ENCODE measurements at regions of chr6 and their contacts with region 1.

Region 1: DNA sequence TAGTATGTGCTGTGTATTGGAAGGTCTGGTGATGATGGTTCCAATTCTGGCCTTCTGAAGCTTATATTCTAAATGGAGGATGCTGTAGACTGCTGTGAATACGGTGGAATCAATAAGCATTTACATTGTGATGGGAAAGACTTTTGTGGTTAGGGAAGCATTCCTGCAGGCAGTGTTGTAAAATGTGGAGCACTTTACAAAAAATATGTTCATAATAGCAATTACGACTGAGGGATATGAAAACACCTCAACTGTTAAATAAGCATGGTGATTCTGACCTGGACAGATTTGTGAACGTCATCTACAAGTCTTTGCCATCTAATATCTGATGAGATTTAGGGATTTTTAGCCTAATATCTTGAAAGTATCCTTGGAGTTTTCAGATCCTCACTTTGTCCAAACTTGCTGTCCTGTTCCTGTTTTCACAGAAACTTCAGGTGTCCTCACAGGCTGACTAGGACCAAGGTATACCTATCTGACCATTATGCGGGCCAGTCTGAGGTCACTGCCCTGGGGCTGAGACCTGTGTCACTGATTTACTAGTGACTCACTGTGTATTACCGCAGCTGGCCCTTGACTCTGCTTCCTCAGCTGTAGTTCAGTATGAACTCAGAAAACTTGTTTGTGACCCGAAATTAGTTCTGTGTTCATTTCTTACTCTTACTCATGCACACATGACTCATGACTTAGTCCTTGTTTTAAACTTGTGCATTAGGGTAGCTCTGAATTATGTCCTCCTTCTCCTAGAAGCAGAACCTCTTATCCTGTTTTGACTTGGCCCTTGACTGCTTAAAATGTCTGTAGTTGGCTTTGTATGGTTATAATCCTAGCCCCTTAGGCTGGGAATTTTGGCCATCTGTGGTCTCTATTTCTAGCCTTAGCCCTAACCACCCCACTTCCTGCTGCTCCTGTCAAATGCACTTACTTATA is 343.0 kb downstream of the CDKAL1 start:
- DNase-seq: peak; percentile 89
- ATAC-seq: peak; percentile 98
- H3K4me3 ChIP-seq: no peak overlapping the region
- H3K27ac ChIP-seq: peak overlapping the region; percentile 80
- H3K4me1 ChIP-seq: peaks cover 18% of the 10 kb centered on the region; the same call in 1 of the 2 replicates
- H3K27me3 ChIP-seq: no peaks in the 10 kb centered on the region
- CTCF ChIP-seq: no peak
- EP300 ChIP-seq: peak; percentile 76 to 91
- POLR2A ChIP-seq: no peak
- RAD21 ChIP-seq: no peak

Region 2: DNA sequence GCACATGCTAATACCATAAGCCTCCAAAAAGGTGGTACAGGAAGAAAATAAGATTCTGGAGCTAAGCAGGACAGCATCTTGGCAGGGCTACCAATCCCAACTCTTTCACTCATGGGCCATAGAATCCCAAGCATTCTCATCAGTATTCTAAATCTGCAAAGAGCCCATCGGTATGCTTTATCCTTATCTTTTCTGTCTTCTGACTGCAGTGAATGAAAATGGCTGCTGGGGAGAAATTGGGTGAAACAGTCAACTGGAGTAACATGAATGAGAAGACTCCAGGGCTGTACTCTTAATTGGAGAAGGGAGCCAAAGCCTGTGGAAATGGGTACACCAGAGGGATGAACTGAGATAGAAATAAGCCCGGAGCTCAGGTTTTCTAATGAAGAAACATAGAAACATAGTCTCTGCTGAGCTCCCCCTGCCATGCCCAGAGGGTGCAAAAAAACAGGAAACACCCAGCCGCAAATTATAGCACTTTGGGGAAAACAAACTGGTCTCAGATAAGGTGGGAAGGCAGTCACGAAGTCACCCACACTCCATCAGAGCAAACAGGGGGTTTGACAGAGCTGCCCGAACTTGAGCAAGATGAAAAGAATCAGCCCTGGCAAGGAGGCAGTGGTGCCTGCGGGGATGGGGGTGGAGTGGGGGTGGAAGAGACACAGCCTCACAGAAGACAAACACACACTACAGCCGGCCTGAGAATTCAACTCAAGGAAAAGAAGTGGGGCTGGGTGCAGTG is 511.0 kb before region 1 on chr6:
- CTCF ChIA-PET with region 1: no interaction called
- POLR2A ChIA-PET with region 1: no interaction called
- RAD21 ChIA-PET with region 1: no interaction called
- SMC1A ChIA-PET with region 1: no interaction called
- in situ Hi-C with region 1: no loop called
- intact Hi-C with region 1: no loop called
- DNase-seq: no peak
- ATAC-seq: peak; percentile 55
- H3K4me3 ChIP-seq: no peak overlapping the region
- H3K27ac ChIP-seq: no peak overlapping the region
- H3K4me1 ChIP-seq: no peaks in the 10 kb centered on the region
- H3K27me3 ChIP-seq: no peaks in the 10 kb centered on the region
- CTCF ChIP-seq: no peak
- EP300 ChIP-seq: no peak
- POLR2A ChIP-seq: no peak
- RAD21 ChIP-seq: no peak

Region 3: GRCh38 chr6:20833881-20834515 is 43.3 kb before region 1 on chr6:
- CTCF ChIA-PET with region 1: no interaction called
- POLR2A ChIA-PET with region 1: no interaction called
- RAD21 ChIA-PET with region 1: no interaction called
- SMC1A ChIA-PET with region 1: no interaction called
- in situ Hi-C with region 1: no loop called
- intact Hi-C with region 1: no loop called
- DNase-seq: no peak
- ATAC-seq: no peak
- H3K4me3 ChIP-seq: no peak overlapping the region
- H3K27ac ChIP-seq: no peak overlapping the region
- H3K4me1 ChIP-seq: no peaks in the 10 kb centered on the region
- H3K27me3 ChIP-seq: no peaks in the 10 kb centered on the region
- CTCF ChIP-seq: no peak
- EP300 ChIP-seq: no peak
- POLR2A ChIP-seq: no peak
- RAD21 ChIP-seq: no peak

Region 4: GRCh38 chr6:20866935-20867703 is 10.2 kb before region 1 on chr6:
- CTCF ChIA-PET with region 1: interaction called, 10 read pairs
- POLR2A ChIA-PET with region 1: no interaction called
- RAD21 ChIA-PET with region 1: interaction called, 6 read pairs
- SMC1A ChIA-PET with region 1: interaction called, 4 read pairs
- in situ Hi-C with region 1: no loop called
- intact Hi-C with region 1: no loop called
- DNase-seq: no peak
- ATAC-seq: no peak
- H3K4me3 ChIP-seq: no peak overlapping the region
- H3K27ac ChIP-seq: no peak overlapping the region
- H3K4me1 ChIP-seq: no peaks in the 10 kb centered on the region
- H3K27me3 ChIP-seq: no peaks in the 10 kb centered on the region
- CTCF ChIP-seq: no peak
- EP300 ChIP-seq: no peak
- POLR2A ChIP-seq: no peak
- RAD21 ChIP-seq: no peak

Region 5: DNA sequence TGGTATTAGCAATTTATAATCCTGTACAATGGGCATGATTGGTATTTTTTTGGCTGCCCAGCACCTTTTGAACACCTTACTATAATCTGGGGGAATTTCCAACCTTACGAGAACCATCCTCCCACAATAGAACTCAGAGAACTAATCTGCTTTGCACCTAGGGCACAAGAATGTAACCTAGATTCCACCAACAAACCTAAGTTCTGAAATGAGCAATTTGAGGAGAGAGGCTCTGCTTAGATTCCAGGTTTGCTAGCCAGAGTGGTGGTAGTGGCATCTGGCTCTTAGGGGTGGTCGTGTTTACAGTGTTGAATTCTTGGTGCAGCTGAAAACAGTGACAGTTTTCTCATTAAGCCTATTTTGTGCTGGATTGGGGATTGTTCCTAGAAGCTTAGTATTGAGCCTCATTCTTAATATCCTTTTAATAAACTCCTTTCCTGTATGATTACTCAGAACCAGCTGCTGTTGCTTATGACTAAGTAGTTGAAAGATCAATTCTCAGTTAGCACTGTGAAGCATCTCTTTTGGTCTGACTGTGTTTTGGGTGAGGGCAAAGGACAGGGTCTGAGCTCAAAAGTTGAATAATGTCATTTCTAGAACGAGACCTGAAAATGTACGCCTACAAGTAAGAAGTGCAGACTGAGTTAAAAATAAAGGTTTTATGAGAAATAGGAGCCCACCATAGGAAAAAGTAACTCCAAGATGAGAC is 42.6 kb after region 1 on chr6:
- CTCF ChIA-PET with region 1: interaction called, 4 read pairs
- POLR2A ChIA-PET with region 1: no interaction called
- RAD21 ChIA-PET with region 1: interaction called, 6 read pairs
- SMC1A ChIA-PET with region 1: interaction called, 11 read pairs
- in situ Hi-C with region 1: no loop called
- intact Hi-C with region 1: no loop called
- DNase-seq: peak; percentile 59
- ATAC-seq: peak; percentile 81
- H3K4me3 ChIP-seq: no peak overlapping the region
- H3K27ac ChIP-seq: peak overlapping the region; percentile 77
- H3K4me1 ChIP-seq: peaks cover 17% of the 10 kb centered on the region
- H3K27me3 ChIP-seq: no peaks in the 10 kb centered on the region
- CTCF ChIP-seq: no peak
- EP300 ChIP-seq: peak; percentile 37 to 46; a peak in 2 of 4 replicates
- POLR2A ChIP-seq: no peak
- RAD21 ChIP-seq: no peak

Region 6: DNA sequence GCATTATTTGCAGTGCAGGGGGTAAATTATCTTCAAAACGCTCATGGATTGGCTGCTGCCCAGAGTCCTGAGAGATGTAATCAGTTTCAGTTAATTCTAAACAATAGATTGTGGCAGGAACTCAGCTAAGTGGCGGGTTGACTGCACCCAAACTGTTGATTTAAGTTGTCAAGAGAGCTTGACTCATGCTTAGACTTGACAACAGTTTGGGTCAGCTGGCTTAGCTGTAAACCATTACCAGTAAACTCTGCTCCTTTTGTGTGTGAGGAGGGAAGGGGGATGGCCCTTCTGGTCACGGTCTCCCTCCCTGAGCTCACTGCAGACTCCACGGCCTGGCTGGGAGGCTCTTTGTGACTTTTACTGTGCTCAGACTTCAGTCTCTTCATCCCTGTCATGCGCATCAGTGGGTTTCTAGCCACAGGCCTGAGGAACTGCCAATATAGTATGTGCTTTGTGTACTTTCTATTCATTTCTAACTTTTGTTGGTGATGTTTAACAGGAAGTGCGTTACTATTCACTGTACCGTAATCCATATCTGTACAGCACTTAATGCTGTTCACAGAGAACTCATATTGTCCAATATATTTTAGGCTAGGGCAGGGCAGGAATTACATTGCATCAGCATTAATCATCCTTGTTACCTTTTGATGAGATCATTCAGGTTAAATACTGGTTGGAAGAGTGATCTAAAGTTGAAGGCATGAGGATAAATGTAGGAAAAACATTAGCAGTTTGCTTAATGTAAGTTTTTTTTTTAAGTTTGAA is 145.3 kb after region 1 on chr6:
- CTCF ChIA-PET with region 1: interaction called, 9 read pairs
- POLR2A ChIA-PET with region 1: no interaction called
- RAD21 ChIA-PET with region 1: interaction called, 17 read pairs
- SMC1A ChIA-PET with region 1: interaction called, 12 read pairs
- in situ Hi-C with region 1: no loop called
- intact Hi-C with region 1: loop called (anchors 2 kb)
- DNase-seq: peak; percentile 90
- ATAC-seq: peak; percentile 97
- H3K4me3 ChIP-seq: no peak overlapping the region; the same call in 1 of the 2 replicates
- H3K27ac ChIP-seq: peak overlapping the region; percentile 83
- H3K4me1 ChIP-seq: peaks cover 3% of the 10 kb centered on the region; the same call in 1 of the 2 replicates
- H3K27me3 ChIP-seq: no peaks in the 10 kb centered on the region
- CTCF ChIP-seq: no peak
- EP300 ChIP-seq: peak; percentile 87 to 89
- POLR2A ChIP-seq: peak; percentile 49
- RAD21 ChIP-seq: no peak; the same call in 1 of the 2 replicates

Region 7: DNA sequence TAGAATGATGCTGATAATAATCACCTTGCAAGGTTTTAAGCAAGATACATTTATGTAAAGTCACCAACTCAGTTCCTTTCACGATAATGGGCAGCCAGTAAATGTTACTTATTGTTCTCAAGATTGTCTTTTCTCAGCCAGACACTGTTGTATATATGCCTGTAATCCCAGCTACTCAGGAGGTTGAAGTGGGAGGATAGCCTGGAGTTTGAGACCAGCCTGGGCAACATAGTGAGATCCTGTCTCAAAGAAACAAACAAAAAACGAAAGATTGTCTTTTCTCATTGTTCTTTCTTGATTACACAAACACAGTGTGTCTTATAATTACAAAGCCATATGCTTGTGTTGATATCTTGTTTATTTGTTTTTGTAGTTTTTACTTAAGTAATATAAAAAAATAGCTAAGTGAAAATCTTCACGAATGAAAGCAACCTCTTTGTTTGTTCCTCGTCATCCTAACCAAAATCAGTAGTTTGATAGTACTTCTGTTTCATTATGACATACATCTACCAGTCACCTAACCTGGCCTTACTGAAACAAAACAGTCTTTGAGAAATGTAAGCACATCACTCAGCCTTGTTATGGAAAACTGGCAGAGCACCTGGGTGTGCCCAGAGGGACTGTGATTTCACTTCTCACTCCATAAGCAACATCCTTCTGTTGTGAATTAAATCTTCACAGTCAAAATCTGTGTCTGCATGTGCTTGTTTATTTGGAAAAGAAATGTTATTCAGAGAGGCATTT is 280.1 kb after region 1 on chr6:
- CTCF ChIA-PET with region 1: interaction called, 3 read pairs
- POLR2A ChIA-PET with region 1: no interaction called
- RAD21 ChIA-PET with region 1: no interaction called
- SMC1A ChIA-PET with region 1: interaction called, 4 read pairs
- in situ Hi-C with region 1: no loop called
- intact Hi-C with region 1: loop called (anchors 5 kb)
- DNase-seq: peak; percentile 53
- ATAC-seq: peak; percentile 86
- H3K4me3 ChIP-seq: no peak overlapping the region
- H3K27ac ChIP-seq: peak overlapping the region; percentile 54; the same call in 1 of the 2 replicates
- H3K4me1 ChIP-seq: peaks cover 13% of the 10 kb centered on the region; the same call in 1 of the 2 replicates
- H3K27me3 ChIP-seq: no peaks in the 10 kb centered on the region
- CTCF ChIP-seq: no peak
- EP300 ChIP-seq: peak; percentile 72 to 84; a peak in 3 of 4 replicates
- POLR2A ChIP-seq: no peak
- RAD21 ChIP-seq: no peak

Region 8: DNA sequence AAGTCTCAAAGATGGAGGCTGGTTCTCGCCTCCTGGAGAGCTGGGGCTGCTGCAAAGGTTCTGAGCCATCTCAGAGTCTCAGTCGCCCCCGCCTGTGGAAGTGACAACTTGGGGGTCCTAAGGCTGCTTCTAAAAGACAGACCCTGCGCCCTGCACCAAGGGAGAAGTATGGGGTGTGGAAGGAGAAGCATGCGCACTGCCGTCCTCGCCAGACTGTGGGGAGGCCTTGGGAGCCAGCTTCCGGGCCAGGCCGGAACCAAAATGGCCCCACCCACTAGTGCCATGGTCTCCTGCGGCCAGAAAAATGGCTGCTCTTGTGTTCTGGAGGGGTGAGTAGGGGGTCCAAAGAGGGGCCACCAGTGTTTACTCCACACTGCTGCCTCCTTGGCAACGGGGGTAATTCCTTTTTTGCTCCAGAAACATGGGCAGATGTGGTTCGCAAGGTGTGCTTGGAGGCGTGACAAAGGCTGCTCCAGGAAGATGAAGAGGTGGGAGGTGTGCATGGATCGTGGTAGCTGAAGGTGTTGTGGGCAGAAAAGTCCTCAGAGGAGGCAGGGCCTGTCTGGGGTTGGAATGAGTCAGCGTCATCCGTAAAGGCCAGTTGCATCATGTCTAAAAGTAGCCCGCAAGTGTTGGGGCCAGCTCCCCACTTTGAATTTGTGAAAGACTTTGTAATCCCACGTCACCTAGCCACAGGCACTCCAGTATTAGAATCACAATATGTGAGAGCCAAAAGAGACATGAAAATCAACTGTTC is 386.4 kb after region 1 on chr6:
- CTCF ChIA-PET with region 1: no interaction called
- POLR2A ChIA-PET with region 1: no interaction called
- RAD21 ChIA-PET with region 1: interaction called, 4 read pairs
- SMC1A ChIA-PET with region 1: interaction called, 7 read pairs
- in situ Hi-C with region 1: no loop called
- intact Hi-C with region 1: loop called (anchors 2 kb)
- DNase-seq: peak; percentile 63
- ATAC-seq: peak; percentile 94
- H3K4me3 ChIP-seq: no peak overlapping the region
- H3K27ac ChIP-seq: peak overlapping the region; percentile 69
- H3K4me1 ChIP-seq: peaks cover 17% of the 10 kb centered on the region
- H3K27me3 ChIP-seq: no peaks in the 10 kb centered on the region
- CTCF ChIP-seq: no peak
- EP300 ChIP-seq: peak; percentile 64 to 92; a peak in 3 of 4 replicates
- POLR2A ChIP-seq: no peak
- RAD21 ChIP-seq: 0 out of 2 replicates have a peak, but pooled peaks have one; percentile 7

Region 9: DNA sequence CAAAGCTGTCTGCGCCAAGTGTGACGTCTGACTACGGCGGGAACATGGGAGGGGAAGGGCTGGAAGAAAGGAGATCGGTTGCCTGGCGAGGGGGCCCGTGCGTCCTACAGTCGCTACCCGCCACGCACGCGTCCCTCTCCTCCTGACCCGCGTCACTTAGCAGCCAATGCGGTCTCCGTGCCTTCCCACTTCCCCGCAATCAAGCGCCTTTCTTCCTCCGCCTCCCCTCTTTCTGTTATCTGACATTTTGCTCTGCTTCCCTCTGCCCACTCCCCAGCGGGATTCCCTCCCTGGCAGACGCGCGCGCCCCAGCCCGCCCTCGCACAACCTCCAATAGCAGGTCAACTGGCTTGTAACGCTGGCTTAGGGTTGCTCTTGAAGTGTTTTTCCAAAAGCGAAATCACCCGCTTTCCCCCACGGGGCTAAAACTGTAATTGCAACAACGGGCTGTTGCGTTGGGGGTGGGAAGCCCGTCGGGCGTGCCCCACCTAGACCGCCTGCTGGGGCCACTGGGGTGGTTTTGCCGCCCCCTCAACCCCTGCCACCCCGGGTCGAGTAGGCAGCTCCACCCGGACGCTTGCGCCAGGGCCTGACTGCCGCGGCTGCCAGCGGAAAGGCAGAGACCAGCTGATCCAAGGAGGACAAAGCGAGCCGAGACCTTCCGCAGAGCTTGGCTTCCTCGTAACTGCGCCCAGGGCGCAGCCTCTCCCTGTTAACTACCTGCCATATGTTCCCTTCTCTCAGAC is 710.1 kb after region 1 on chr6:
- CTCF ChIA-PET with region 1: interaction called, 38 read pairs
- POLR2A ChIA-PET with region 1: interaction called, 17 read pairs
- RAD21 ChIA-PET with region 1: interaction called, 68 read pairs
- SMC1A ChIA-PET with region 1: interaction called, 48 read pairs
- in situ Hi-C with region 1: loop called (anchors 10 kb)
- intact Hi-C with region 1: loop called (anchors 1 kb)
- DNase-seq: no peak
- ATAC-seq: peak; percentile 62
- H3K4me3 ChIP-seq: peak overlapping the region; percentile 79
- H3K27ac ChIP-seq: peak overlapping the region; percentile 77
- H3K4me1 ChIP-seq: peaks cover 4% of the 10 kb centered on the region; the same call in 1 of the 2 replicates
- H3K27me3 ChIP-seq: no peaks in the 10 kb centered on the region
- CTCF ChIP-seq: peak; percentile 5 to 30 (median 19); a peak in 2 of 6 replicates
- EP300 ChIP-seq: no peak
- POLR2A ChIP-seq: no peak
- RAD21 ChIP-seq: peak; percentile 45

Measured in GM12878 (cell line).